HCT116 (cell line): ENCODE measurements at regions of chr10 and their contacts with region 1.

Region 1: GRCh38 chr10:17599089-17599488 is 18.1 kb downstream of the HACD1 start:
- DNase-seq: peak; percentile 13
- ATAC-seq: peak; percentile 79
- H3K4me3 ChIP-seq: no peak overlapping the region
- H3K27ac ChIP-seq: no peak overlapping the region
- H3K4me1 ChIP-seq: no peaks in the 10 kb centered on the region
- H3K27me3 ChIP-seq: no peaks in the 10 kb centered on the region
- CTCF ChIP-seq: peak; percentile 38 to 47 (median 42); a peak in 4 of 6 replicates
- POLR2A ChIP-seq: no peak
- RAD21 ChIP-seq: peak; percentile 59

Region 2: DNA sequence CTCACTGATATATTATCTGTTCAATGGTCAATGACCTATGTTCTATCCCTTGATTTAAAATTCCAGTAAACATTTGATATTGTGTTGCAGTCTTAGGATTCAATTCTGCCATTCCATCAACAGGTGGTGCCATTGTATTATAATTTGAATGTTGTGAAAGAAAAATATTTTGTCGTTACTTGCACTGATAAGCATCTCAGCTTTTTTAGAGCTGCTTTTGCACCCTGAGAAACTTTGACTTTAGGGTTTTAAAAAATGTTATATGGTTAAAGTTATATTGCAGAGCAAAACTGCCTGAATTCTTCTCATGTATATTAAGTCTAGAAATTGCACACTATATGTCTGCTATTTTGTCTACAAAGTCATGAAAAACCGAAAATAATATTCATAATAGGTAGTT is 1720.0 kb before region 1 on chr10:
- CTCF ChIA-PET with region 1: no interaction called
- POLR2A ChIA-PET with region 1: no interaction called
- RAD21 ChIA-PET with region 1: no interaction called
- intact Hi-C with region 1: loop called (anchors 5 kb)
- DNase-seq: no peak
- ATAC-seq: peak; percentile 53
- H3K4me3 ChIP-seq: no peak overlapping the region
- H3K27ac ChIP-seq: no peak overlapping the region
- H3K4me1 ChIP-seq: no peaks in the 10 kb centered on the region
- H3K27me3 ChIP-seq: peaks cover 33% of the 10 kb centered on the region
- CTCF ChIP-seq: peak; percentile 48 to 82 (median 59); a peak in 5 of 6 replicates
- POLR2A ChIP-seq: no peak
- RAD21 ChIP-seq: peak; percentile 69

Region 3: DNA sequence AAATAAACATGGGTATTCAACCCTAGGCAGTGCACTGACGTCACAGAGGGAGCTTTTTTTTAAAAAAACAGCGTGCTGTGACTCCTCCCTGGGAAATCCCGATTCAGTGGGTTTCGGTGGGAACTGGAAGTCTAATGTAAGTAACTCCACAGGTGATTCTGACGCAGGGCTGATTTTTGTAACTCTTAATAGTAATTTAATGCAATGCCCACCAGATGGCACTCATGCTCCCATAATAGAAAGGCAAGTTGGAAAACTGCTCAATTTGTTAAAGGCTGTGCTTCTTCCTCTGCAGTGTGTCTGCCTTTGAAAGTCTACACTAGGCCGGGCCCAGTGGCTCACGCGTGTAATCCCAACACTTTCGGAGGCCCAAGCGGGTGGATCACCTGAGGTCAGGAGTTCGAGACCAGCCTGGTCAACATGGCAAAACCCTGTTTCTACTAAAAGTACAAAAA is 770.9 kb before region 1 on chr10:
- CTCF ChIA-PET with region 1: no interaction called
- POLR2A ChIA-PET with region 1: no interaction called
- RAD21 ChIA-PET with region 1: no interaction called
- intact Hi-C with region 1: loop called (anchors 5 kb)
- DNase-seq: peak; percentile 83
- ATAC-seq: peak; percentile 90
- H3K4me3 ChIP-seq: no peak overlapping the region
- H3K27ac ChIP-seq: no peak overlapping the region
- H3K4me1 ChIP-seq: no peaks in the 10 kb centered on the region; a peak in 1 of 4 replicates
- H3K27me3 ChIP-seq: no peaks in the 10 kb centered on the region
- CTCF ChIP-seq: peak; percentile 46 to 57 (median 54); a peak in 5 of 6 replicates
- POLR2A ChIP-seq: no peak
- RAD21 ChIP-seq: peak; percentile 83

Region 4: DNA sequence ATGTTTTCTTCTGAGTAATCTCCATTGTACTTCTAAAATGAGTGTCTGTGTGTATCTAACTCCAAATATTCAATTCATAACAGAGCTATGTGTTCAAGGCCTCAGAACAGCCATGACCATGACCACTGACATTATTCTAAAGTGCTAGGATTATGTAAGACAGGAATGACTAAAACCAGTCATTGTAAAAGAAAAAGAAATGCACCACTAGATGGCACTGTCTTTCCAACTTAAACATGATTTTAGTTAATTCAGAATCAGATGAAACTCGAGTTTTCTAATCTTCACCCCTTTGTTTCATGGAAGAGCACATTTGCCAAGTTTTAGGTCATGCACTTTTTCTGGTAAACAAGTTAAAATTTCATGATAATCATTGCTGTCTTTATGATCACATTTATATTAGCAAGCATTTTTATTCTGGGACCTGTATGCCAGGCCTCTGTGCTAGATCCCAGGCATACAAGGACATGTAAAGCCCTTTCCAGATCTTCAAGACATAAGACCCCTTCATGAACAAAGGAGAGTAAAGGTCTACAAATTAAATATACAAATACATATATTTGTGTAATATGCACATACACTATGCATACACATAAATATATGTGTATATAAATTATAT is 755.7 kb before region 1 on chr10:
- CTCF ChIA-PET with region 1: no interaction called
- POLR2A ChIA-PET with region 1: no interaction called
- RAD21 ChIA-PET with region 1: no interaction called
- intact Hi-C with region 1: loop called (anchors 5 kb)
- DNase-seq: peak; percentile 58
- ATAC-seq: peak; percentile 68
- H3K4me3 ChIP-seq: no peak overlapping the region
- H3K27ac ChIP-seq: no peak overlapping the region
- H3K4me1 ChIP-seq: no peaks in the 10 kb centered on the region
- H3K27me3 ChIP-seq: no peaks in the 10 kb centered on the region
- CTCF ChIP-seq: peak; percentile 23 to 74 (median 72); a peak in 4 of 6 replicates
- POLR2A ChIP-seq: no peak
- RAD21 ChIP-seq: peak; percentile 82

Region 5: GRCh38 chr10:17290226-17290625 is 308.9 kb before region 1 on chr10:
- CTCF ChIA-PET with region 1: no interaction called
- POLR2A ChIA-PET with region 1: no interaction called
- RAD21 ChIA-PET with region 1: no interaction called
- intact Hi-C with region 1: loop called (anchors 1 kb)
- DNase-seq: peak; percentile 50
- ATAC-seq: peak; percentile 88
- H3K4me3 ChIP-seq: no peak overlapping the region
- H3K27ac ChIP-seq: no peak overlapping the region
- H3K4me1 ChIP-seq: peaks cover 0 to 9% of the 10 kb centered on the region in 2 experiments; a peak in 2 of 4 replicates
- H3K27me3 ChIP-seq: no peaks in the 10 kb centered on the region
- CTCF ChIP-seq: peak; percentile 38 to 68 (median 66)
- POLR2A ChIP-seq: no peak
- RAD21 ChIP-seq: peak; percentile 87

Region 6: GRCh38 chr10:17430647-17431355 is 168.3 kb before region 1 on chr10:
- CTCF ChIA-PET with region 1: no interaction called
- POLR2A ChIA-PET with region 1: no interaction called
- RAD21 ChIA-PET with region 1: no interaction called
- intact Hi-C with region 1: loop called (anchors 10 kb)
- DNase-seq: peak; percentile 54
- ATAC-seq: peak; percentile 95
- H3K4me3 ChIP-seq: no peak overlapping the region
- H3K27ac ChIP-seq: no peak overlapping the region
- H3K4me1 ChIP-seq: peaks cover 0 to 4% of the 10 kb centered on the region in 2 experiments; a peak in 1 of 4 replicates
- H3K27me3 ChIP-seq: no peaks in the 10 kb centered on the region
- CTCF ChIP-seq: peak; percentile 79 to 89 (median 89); a peak in 5 of 6 replicates
- POLR2A ChIP-seq: no peak
- RAD21 ChIP-seq: peak; percentile 88

Region 7: GRCh38 chr10:17961551-17962422 is 362.7 kb after region 1 on chr10:
- CTCF ChIA-PET with region 1: no interaction called
- POLR2A ChIA-PET with region 1: no interaction called
- RAD21 ChIA-PET with region 1: no interaction called
- intact Hi-C with region 1: no loop called
- DNase-seq: no peak
- ATAC-seq: no peak
- H3K4me3 ChIP-seq: no peak overlapping the region
- H3K27ac ChIP-seq: no peak overlapping the region
- H3K4me1 ChIP-seq: no peaks in the 10 kb centered on the region
- H3K27me3 ChIP-seq: no peaks in the 10 kb centered on the region
- CTCF ChIP-seq: no peak
- POLR2A ChIP-seq: no peak
- RAD21 ChIP-seq: no peak

Region 8: DNA sequence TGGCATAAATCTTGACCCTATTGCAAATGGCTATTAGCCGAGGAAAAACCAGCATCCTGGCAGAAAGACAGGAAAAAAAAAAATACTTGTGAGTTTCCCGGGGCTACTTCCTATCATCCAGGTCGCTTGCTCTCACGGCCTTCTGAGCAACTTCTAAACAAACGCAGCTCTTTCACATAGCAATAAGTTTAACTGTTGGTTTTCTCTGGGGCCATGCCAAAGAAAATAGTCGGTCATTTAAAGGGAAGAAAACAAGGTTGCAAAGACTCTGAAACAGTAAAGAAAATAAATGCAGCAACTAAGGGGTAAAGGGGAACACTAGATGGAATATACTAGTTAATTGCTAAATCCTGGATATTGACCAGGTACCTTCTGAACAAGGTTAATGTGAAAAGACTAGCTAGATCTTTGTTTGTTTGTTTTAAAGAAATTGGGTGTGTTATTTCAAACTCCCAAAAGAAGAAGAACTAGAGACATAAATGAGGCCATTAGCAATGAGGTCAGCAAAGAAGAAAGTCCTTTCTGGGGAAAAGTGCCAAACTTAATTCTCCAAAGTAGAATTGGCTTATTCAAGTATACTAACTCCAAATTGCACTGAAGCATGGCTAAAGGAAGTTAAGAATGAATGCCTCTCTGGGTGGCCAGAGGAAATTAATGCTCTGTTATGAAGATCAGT is 406.8 kb after region 1 on chr10:
- CTCF ChIA-PET with region 1: no interaction called
- POLR2A ChIA-PET with region 1: no interaction called
- RAD21 ChIA-PET with region 1: no interaction called
- intact Hi-C with region 1: no loop called
- DNase-seq: no peak
- ATAC-seq: no peak; the same call in 1 of the 2 replicates
- H3K4me3 ChIP-seq: no peak overlapping the region
- H3K27ac ChIP-seq: peak overlapping the region; percentile 36; the same call in 1 of the 2 replicates
- H3K4me1 ChIP-seq: peaks cover 5 to 10% of the 10 kb centered on the region in 2 experiments; a peak in 2 of 4 replicates
- H3K27me3 ChIP-seq: peaks cover 27% of the 10 kb centered on the region; the same call in 1 of the 2 replicates
- CTCF ChIP-seq: no peak
- POLR2A ChIP-seq: no peak
- RAD21 ChIP-seq: no peak